GM10248 (cell line): ENCODE measurements at regions of chr7 and their contacts with region 1.

Region 1: GRCh38 chr7:131507592-131508331 is 48.7 kb downstream of the PODXL start:
- DNase-seq: peak; percentile 80
- CTCF ChIP-seq: peak; percentile 90

Region 2: DNA sequence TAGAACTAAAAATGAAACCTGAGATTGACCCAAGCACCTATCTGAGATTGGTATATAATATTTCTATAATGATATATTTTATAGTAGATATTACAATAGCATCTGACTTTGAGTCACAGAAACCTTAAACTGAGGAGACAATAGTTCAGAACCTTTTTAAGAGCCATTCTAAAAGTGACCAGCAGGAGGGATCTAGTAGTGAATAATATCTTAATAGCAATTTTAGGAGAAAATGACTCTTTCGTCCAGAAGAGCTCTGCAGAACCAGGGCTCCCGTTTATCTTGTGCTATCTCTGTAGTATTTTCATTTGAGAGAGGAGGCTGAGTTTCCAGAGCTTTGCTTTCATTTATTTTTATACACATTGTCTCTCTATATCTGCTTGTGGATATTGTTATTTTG is 19.4 kb before region 1 on chr7:
- CTCF ChIA-PET with region 1: interaction called, 21 read pairs
- POLR2A ChIA-PET with region 1: no interaction called
- DNase-seq: no peak
- CTCF ChIP-seq: no peak

Region 3: DNA sequence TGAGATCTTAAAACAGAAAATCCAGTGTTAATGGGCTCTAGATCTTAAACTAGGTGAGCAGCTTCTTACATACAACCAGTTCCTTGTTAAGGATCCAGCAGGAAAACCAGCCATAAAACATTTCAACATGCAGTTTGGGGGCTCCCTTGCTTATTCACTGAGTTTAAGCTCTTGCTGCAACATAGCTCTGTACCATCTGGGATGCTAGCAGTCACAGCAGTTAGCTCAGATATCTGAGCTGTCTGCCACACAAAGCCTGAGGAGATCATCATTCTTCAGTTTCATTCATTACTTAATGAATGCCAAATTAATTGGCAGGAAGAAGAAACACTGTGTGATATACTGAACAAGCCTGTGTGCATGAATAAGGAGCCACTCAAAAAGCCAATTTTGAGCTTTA is 14.2 kb before region 1 on chr7:
- CTCF ChIA-PET with region 1: interaction called, 21 read pairs
- POLR2A ChIA-PET with region 1: no interaction called
- DNase-seq: no peak
- CTCF ChIP-seq: no peak

Region 4: GRCh38 chr7:131521651-131522163 is 13.9 kb after region 1 on chr7:
- CTCF ChIA-PET with region 1: interaction called, 36 read pairs
- POLR2A ChIA-PET with region 1: no interaction called
- DNase-seq: no peak
- CTCF ChIP-seq: no peak

Region 5: GRCh38 chr7:131654668-131655326 is 147.0 kb after region 1 on chr7:
- CTCF ChIA-PET with region 1: interaction called, 20 read pairs
- POLR2A ChIA-PET with region 1: no interaction called
- DNase-seq: peak; percentile 91
- CTCF ChIP-seq: peak; percentile 99